Heart left ventricle (tissue), 16 donors: ENCODE measurements at regions of chrX and their contacts with region 1.

Region 1: DNA sequence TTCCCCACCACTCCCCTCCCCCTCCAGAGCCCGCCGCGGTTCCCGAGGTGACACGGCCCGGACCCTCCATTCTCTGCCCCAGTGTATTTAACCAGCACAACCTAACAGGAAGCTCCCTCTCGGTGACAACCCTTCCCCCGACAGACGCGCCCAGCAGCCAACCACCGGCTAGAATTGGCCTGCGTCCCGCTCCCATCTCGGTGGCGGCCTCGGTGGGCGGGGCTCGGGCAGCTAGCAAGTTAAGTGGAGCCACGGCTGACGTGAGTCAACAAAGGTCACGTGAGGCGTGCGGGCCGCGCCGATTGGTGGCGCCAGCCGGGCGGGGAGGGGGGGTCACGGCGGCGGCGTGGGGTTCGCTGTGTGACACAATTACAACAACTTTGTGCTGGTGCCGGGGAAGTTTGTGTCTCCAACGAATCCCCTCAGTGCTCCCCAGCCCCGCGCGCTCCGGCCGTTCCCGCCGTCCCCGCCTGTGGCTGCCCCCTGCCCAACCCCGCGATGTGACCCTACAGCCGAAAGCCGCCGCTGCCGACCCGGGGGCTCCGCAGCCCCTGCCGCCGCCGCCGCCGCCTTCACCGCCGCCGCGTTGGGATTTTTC is at the start of gene KDM6A:
- DNase-seq: peak; percentile 97 to 100 (median 97)
- ATAC-seq: peak; percentile 92 to 98 (median 94)
- H3K4me3 ChIP-seq: peak within 1 kb of the TSS; percentile 55 to 94 (median 86)
- H3K27ac ChIP-seq: peak within 1 kb of the TSS; percentile 93 to 100 (median 98)
- H3K4me1 ChIP-seq: peaks cover 0 to 44% (median 11%) of the 10 kb centered on the region in 12 donors
- H3K27me3 ChIP-seq: no peaks in the 10 kb centered on the region
- CTCF ChIP-seq: no peak
- POLR2A ChIP-seq: peak in 1 of 2 donors; percentile 84
- total RNA-seq, gene KDM6A: 10.1 to 27.8 (median 14.3) TPM

Region 2: GRCh38 chrX:44953734-44954502 is 81.0 kb after region 1 on chrX:
- intact Hi-C with region 1: loop called in 1 of 10 experiments (anchors 10 kb)
- DNase-seq: no peak
- ATAC-seq: peak in 2 of 4 donors; percentile 48 to 67
- H3K4me3 ChIP-seq: no peak overlapping the region
- H3K27ac ChIP-seq: no peak overlapping the region
- H3K4me1 ChIP-seq: peaks cover 0 to 62% (median 13%) of the 10 kb centered on the region in 12 donors
- H3K27me3 ChIP-seq: no peaks in the 10 kb centered on the region
- CTCF ChIP-seq: no peak
- POLR2A ChIP-seq: no peak